A673 (cell line): ENCODE measurements at regions of chr10 and their contacts with region 1.

Region 1: DNA sequence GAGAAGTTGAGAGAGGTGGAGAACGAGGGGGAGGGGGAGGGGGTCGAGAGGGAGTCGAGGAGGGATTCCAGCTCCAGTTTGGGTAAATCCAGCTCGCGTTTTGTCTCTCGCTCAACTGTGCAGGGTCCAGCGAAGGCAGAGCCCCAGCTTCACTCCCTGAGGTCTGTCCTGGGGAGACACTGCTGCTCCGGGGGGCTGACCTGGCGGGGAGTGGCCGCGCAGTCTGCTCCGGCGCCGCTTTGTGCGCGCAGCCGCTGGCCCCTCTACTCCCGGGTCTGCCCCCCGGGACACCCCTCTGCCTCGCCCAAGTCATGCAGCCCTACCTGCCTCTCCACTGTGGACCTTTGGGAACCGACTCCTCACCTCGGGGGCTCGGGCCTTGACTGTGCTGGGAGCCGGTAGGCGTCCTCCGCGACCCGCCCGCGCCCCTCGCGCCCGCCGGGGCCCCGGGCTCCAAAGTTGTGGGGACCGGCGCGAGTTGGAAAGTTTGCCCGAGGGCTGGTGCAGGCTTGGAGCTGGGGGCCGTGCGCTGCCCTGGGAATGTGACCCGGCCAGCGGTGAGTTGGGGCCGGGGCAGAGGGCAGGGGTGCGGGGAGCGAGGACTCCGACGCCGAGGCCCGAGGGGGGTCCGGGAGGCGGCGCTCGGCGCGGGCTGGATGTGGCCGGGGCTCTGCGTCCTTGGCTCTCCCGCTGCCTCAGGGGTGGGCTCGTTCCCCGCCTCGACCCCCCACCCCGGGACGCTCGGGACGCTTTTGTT is at the start of gene TET1:
- DNase-seq: peak; percentile 78
- H3K4me3 ChIP-seq: peak within 1 kb of the TSS; percentile 80
- H3K27ac ChIP-seq: peak within 1 kb of the TSS; percentile 88
- H3K4me1 ChIP-seq: peaks cover 12% of the 10 kb centered on the region
- H3K27me3 ChIP-seq: no peaks in the 10 kb centered on the region
- CTCF ChIP-seq: no peak
- total RNA-seq, gene TET1: 15.2 and 17.4 TPM in 2 replicates

Region 2: DNA sequence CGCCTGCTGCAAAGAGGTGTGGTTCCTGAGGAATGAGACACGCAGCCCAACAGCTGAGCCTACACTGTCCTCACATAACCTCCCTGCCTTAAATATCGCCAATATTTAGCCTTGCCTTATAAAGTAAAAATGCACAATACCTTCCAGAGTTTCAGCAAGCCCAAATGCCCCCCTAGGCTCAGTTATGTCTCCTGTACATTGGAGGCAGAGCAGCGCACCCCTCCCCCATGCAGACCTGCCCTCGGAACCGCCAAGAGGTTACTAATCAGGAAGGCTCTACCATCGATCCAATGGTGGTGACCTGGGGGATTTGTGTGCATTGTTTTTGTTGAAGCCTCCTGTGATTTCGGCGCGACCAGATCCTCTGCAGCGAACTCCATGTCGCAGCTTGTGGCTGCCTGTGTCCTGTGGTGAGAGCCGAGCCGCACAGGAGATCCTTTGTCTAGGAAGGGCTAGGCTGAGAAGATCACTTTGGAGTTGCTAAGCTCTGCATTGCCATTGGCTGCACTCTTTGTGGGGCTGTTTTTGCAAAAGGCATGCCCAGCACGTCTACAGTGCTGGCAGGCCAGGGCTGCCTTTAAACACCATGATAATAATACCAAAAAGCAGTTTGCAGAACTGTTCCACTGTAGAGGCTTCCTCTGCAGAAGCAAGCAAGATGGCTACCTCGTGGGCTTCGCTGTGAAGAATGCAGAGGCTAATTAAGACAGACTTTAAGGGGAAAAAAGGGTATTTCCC is 39.8 kb after region 1 on chr10:
- CTCF ChIA-PET with region 1: no interaction called
- POLR2A ChIA-PET with region 1: no interaction called
- intact Hi-C with region 1: loop called (anchors 1 kb)
- DNase-seq: peak; percentile 97
- H3K4me3 ChIP-seq: peak overlapping the region; percentile 43
- H3K27ac ChIP-seq: peak overlapping the region; percentile 84
- H3K4me1 ChIP-seq: peaks cover 36% of the 10 kb centered on the region
- H3K27me3 ChIP-seq: no peaks in the 10 kb centered on the region
- CTCF ChIP-seq: no peak

Region 3: DNA sequence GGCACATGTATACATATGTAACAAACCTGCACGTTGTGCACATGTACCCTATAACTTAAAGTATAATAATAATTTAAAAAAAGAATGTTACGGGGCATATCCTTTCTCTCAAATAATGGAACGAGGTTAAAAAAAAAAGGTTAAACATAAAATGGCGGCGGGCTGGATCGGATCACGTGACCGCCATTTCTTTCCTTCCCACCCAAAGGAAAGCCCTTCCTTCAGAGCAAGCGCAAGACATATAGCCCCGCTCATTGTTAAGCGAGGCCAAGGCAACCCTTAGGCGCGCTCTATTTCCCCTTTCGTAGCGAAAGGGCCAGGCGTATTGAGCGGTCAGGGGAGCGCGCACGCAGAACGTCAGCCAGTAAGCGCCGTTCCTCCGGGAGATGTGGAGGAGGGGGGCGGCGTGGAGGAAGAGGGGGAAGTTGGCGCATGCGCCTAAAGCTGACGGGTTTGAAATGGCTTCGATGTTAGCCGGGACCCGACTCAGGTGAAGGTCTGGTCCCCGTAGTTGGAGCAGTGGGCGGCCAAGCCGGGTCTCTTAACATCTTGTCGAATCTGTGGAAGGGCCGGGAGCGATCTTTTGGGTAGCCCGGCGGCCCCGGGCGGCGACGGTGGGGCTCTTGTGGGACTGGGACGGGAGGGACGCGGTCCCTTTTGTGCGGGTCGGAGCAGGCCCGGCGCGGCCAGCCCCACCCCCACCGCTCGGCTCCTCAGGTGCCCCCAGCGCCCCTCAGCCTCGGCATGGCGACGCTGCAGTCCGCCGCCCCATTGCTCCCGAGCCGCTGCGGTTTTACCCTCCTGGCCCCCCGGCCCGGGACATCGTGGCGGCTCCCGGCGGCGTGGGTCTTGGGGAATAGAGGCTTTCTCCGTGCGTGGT is 160.7 kb after region 1 on chr10 and contains the start of gene CCAR1:
- CTCF ChIA-PET with region 1: no interaction called
- POLR2A ChIA-PET with region 1: no interaction called
- intact Hi-C with region 1: loop called (anchors 5 kb)
- DNase-seq: peak; percentile 100
- H3K4me3 ChIP-seq: peak within 1 kb of the TSS; percentile 94
- H3K27ac ChIP-seq: peak within 1 kb of the TSS; percentile 92
- H3K4me1 ChIP-seq: no peaks in the 10 kb centered on the region
- H3K27me3 ChIP-seq: no peaks in the 10 kb centered on the region
- CTCF ChIP-seq: no peak
- total RNA-seq, gene CCAR1: 126 and 141 TPM in 2 replicates